B cell (primary cell): ENCODE measurements at regions of chr3 and their contacts with region 1.

Region 1: GRCh38 chr3:194103983-194104751 is 31.8 kb upstream of the HES1 start:
- DNase-seq: peak; percentile 94
- ATAC-seq: peak; percentile 88
- H3K4me3 ChIP-seq: peak overlapping the region; percentile 10 to 63 (median 42)
- H3K4me3 Mint-ChIP-seq: peak overlapping the region; percentile 81
- H3K27ac ChIP-seq: peak overlapping the region; percentile 93 to 97
- H3K27ac Mint-ChIP-seq: peak overlapping the region; percentile 81
- H3K4me1 ChIP-seq: peaks cover 85 to 93% of the 10 kb centered on the region in 2 donors
- H3K4me1 Mint-ChIP-seq: peaks cover 88% of the 10 kb centered on the region
- H3K27me3 ChIP-seq: no peaks in the 10 kb centered on the region
- H3K27me3 Mint-ChIP-seq: no peaks in the 10 kb centered on the region
- CTCF ChIP-seq: no peak

Region 2: DNA sequence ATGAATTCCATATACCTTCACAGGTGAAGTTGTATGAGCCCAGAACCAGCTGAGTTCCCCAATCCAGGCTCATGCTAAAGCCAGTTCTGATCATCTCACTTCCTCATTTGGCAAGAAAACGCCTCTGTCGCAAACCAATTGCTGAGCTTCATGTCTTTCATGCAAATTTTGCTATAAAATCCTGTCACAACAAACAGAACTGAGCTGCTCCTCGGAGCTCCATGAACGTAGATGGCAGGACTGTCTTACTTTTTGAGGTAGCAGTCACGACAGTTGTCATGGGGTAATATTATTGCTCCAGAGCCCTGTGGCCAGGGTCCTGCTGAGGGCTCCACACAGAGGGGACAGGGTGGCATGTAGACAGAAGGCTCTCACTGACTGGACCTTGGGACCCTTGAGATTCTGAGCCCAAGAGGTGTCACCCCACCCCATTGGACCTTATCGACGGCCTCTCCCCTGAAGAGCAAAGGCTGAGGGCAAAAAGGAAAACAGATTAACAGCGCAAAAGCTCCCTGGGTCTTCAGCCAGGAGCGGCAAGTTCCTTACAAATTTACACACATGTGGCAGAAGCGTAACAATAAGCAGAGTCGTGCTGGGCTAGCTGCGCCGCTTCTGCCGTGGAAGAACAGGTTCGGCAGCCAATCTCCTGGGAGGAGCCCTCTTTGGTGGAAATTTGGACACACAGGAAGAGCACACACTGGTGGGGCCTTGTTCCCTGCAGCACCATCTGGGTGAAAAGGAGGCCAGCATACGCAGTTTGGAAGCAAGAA is 262.0 kb before region 1 on chr3:
- CTCF ChIA-PET with region 1: no interaction called
- POLR2A ChIA-PET with region 1: interaction called, 6 read pairs
- intact Hi-C with region 1: loop called (anchors 2 kb)
- DNase-seq: peak; percentile 88
- ATAC-seq: peak; percentile 95
- H3K4me3 ChIP-seq: peak overlapping the region in 4 of 5 experiments; percentile 13 to 47 (median 32)
- H3K4me3 Mint-ChIP-seq: peak overlapping the region; percentile 84
- H3K27ac ChIP-seq: peak overlapping the region in 1 of 2 donors; percentile 39
- H3K27ac Mint-ChIP-seq: peak overlapping the region; percentile 91
- H3K4me1 ChIP-seq: peaks cover 19 to 26% of the 10 kb centered on the region in 2 donors
- H3K4me1 Mint-ChIP-seq: peaks cover 39% of the 10 kb centered on the region
- H3K27me3 ChIP-seq: peaks cover 0 to 17% (median 0%) of the 10 kb centered on the region in 4 experiments
- H3K27me3 Mint-ChIP-seq: peaks cover 4% of the 10 kb centered on the region
- CTCF ChIP-seq: no peak

Region 3: GRCh38 chr3:194058189-194058571 is 46.0 kb before region 1 on chr3:
- CTCF ChIA-PET with region 1: no interaction called
- POLR2A ChIA-PET with region 1: interaction called, 6 read pairs
- intact Hi-C with region 1: loop called (anchors 5 kb)
- DNase-seq: peak; percentile 62
- ATAC-seq: peak; percentile 79
- H3K4me3 ChIP-seq: peak overlapping the region in 4 of 5 experiments; percentile 29 to 59 (median 53)
- H3K4me3 Mint-ChIP-seq: peak overlapping the region; percentile 77
- H3K27ac ChIP-seq: no peak overlapping the region
- H3K27ac Mint-ChIP-seq: peak overlapping the region; percentile 7
- H3K4me1 ChIP-seq: peaks cover 15 to 20% of the 10 kb centered on the region in 2 donors
- H3K4me1 Mint-ChIP-seq: peaks cover 18% of the 10 kb centered on the region
- H3K27me3 ChIP-seq: no peaks in the 10 kb centered on the region
- H3K27me3 Mint-ChIP-seq: no peaks in the 10 kb centered on the region
- CTCF ChIP-seq: no peak

Region 4: GRCh38 chr3:194089357-194090177 is 14.6 kb before region 1 on chr3:
- CTCF ChIA-PET with region 1: interaction called, 6 read pairs
- POLR2A ChIA-PET with region 1: interaction called, 7 read pairs
- intact Hi-C with region 1: loop called (anchors 2 kb)
- DNase-seq: peak; percentile 40
- ATAC-seq: peak; percentile 74
- H3K4me3 ChIP-seq: no peak overlapping the region
- H3K4me3 Mint-ChIP-seq: peak overlapping the region; percentile 29
- H3K27ac ChIP-seq: no peak overlapping the region
- H3K27ac Mint-ChIP-seq: peak overlapping the region; percentile 68
- H3K4me1 ChIP-seq: peaks cover 17 to 22% of the 10 kb centered on the region in 2 donors
- H3K4me1 Mint-ChIP-seq: peaks cover 27% of the 10 kb centered on the region
- H3K27me3 ChIP-seq: no peaks in the 10 kb centered on the region
- H3K27me3 Mint-ChIP-seq: no peaks in the 10 kb centered on the region
- CTCF ChIP-seq: no peak